ENCODE measurements at regions of chr7 and their contacts with region 1.

Region 1: DNA sequence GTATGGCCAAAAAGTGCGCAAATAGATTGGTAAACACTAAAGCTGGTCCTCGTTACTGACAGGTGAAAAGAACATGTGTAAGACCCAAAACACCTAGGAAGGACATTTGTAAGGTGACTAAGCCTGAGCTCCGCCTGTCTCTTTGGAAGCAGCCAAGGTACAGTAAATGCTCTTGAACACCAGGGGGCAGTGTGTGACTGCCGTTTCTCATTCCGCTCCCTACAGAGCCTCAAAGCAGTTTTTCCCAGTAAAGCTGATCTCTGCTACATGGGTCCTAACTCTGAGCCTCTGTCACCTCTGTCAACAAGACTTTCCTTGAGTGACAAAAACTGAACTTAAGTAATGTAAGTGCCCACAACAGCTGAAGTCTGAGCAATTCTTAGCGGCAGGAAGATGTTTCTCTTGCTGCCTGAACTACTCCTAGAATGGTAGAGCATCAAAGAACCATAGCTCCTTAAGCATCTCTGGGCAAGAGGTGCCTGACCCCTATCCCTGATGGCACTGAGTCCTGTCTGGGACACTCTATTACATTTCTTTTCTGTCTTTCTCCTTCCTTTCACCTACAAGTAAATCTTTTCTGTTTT is 238.0 kb upstream of the INHBA start:
- DNase-seq: peak; percentile 54 to 77 (median 72)
- H3K4me3 ChIP-seq: no peak overlapping the region
- H3K27ac ChIP-seq: no peak overlapping the region
- H3K4me1 ChIP-seq: peaks cover 0 to 14% (median 5%) of the 10 kb centered on the region in 4 experiments
- H3K27me3 ChIP-seq: peaks cover 0 to 11% (median 2%) of the 10 kb centered on the region in 5 experiments

Region 2: GRCh38 chr7:41907444-41907843 is 33.4 kb before region 1 on chr7:
- CTCF ChIA-PET with region 1: no interaction called
- POLR2A ChIA-PET with region 1: no interaction called
- DNase-seq: no peak
- H3K4me3 ChIP-seq: no peak overlapping the region
- H3K27ac ChIP-seq: no peak overlapping the region
- H3K4me1 ChIP-seq: no peaks in the 10 kb centered on the region
- H3K27me3 ChIP-seq: no peaks in the 10 kb centered on the region

Region 3: GRCh38 chr7:41930538-41931262 is 10.2 kb before region 1 on chr7:
- CTCF ChIA-PET with region 1: interaction called, 21 read pairs
- POLR2A ChIA-PET with region 1: no interaction called
- DNase-seq: no peak
- H3K4me3 ChIP-seq: no peak overlapping the region
- H3K27ac ChIP-seq: no peak overlapping the region
- H3K4me1 ChIP-seq: peaks cover 0 to 23% (median 10%) of the 10 kb centered on the region in 4 experiments
- H3K27me3 ChIP-seq: no peaks in the 10 kb centered on the region

Region 4: GRCh38 chr7:41955893-41956675 is 15.2 kb after region 1 on chr7:
- CTCF ChIA-PET with region 1: interaction called, 16 read pairs
- POLR2A ChIA-PET with region 1: no interaction called
- DNase-seq: peak; percentile 79 to 92 (median 88)
- H3K4me3 ChIP-seq: peak overlapping the region in 4 of 7 experiments; percentile 11 to 58 (median 26)
- H3K27ac ChIP-seq: no peak overlapping the region
- H3K4me1 ChIP-seq: peaks cover 0 to 31% (median 23%) of the 10 kb centered on the region in 4 experiments
- H3K27me3 ChIP-seq: no peaks in the 10 kb centered on the region

Region 5: GRCh38 chr7:42035210-42035609 is 94.4 kb after region 1 on chr7:
- CTCF ChIA-PET with region 1: no interaction called
- POLR2A ChIA-PET with region 1: no interaction called
- DNase-seq: no peak
- H3K4me3 ChIP-seq: no peak overlapping the region
- H3K27ac ChIP-seq: no peak overlapping the region
- H3K4me1 ChIP-seq: no peaks in the 10 kb centered on the region
- H3K27me3 ChIP-seq: peaks cover 0 to 4% (median 0%) of the 10 kb centered on the region in 5 experiments

Region 6: DNA sequence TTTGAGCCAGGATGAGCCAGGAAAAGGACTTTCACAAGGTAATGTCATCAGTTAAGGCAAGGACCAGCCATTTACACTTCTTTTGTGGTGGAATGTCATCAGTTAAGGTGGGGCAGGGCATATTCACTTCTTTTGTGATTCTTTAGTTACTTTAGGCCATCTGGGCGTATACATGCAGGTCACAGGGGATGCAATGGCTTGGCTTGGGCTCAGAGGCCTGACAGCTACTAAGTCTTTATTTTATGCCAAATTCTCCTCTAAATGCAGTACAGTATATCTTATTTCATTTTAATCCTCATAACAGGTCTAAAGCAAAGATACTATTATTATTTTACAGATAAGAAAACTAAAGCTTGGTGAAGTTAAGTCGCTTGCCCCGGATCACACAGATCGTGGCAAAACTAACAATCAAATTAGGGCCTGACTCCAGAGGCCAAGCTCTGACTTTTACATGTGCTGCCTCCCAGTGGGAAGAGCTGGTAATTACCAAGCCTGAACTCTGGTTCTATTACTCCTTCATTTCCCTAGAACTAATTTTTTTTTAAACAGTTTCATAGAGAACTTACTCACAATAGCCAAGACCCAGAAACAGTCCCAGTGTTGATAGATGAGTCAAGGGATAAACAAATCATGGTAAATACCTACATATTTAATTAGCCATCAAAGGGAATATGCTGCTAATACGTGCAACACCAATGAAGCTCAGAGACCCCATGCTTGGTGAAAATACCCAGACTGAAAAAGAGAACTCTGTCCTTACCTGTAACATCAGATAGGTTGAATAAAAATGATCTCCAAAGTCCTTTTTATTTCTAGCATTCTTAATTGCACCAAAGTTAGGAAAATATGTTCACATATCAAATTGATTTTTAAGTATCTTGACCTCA is 935.6 kb after region 1 on chr7:
- CTCF ChIA-PET with region 1: interaction called, 14 read pairs
- POLR2A ChIA-PET with region 1: no interaction called
- DNase-seq: peak; percentile 58 to 72 (median 67)
- H3K4me3 ChIP-seq: no peak overlapping the region
- H3K27ac ChIP-seq: no peak overlapping the region
- H3K4me1 ChIP-seq: peaks cover 2 to 11% (median 9%) of the 10 kb centered on the region in 4 experiments
- H3K27me3 ChIP-seq: no peaks in the 10 kb centered on the region

Measured in common myeloid progenitor, CD34-positive (primary cell).